Vagina (tissue), 2 donors: ENCODE measurements at regions of chrX and their contacts with region 1.

Region 1: DNA sequence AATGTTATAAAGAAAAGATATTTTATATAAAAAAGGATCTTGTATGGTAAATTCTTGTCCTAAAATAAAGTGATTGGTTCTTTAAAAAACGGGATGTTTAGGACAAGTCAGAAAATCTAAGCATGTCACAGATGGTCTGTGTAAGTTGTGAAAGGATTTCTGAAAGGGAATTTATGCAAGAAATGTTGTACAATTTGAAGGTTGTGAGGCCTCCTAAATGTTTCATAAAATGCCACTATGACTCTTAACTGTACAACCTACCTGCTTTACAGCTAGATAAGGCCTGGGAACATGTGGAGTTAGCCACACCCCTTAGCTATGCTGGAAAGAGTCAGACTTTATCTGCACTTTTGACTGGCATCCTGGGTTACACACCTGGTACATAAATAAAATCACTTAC is 951.5 kb upstream of the POU3F4 start:
- DNase-seq: no peak
- H3K4me3 ChIP-seq: no peak overlapping the region
- H3K27ac ChIP-seq: no peak overlapping the region
- H3K4me1 ChIP-seq: no peaks in the 10 kb centered on the region
- H3K27me3 ChIP-seq: no peaks in the 10 kb centered on the region
- CTCF ChIP-seq: no peak
- POLR2A ChIP-seq: no peak

Region 2: DNA sequence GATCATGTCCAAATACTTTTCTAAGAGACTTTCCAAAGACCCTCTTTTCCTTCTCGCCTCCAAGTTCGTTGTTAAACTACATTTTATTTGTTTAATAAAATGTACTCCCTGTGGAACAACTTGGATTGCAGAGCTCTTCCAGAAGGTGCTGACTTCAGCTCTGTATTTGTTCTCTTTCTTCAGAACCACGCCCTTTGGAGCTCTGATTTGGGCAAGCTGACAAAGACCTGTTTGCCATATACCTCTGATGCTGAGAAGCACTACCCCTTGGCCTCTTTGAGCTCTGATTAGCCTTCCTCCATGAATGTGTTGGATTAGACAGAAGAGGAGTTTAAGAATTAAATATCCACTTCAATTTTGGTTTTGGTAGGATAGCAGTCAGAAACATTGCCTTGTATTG is 136.4 kb after region 1 on chrX:
- intact Hi-C with region 1: no loop called
- DNase-seq: no peak
- H3K4me3 ChIP-seq: no peak overlapping the region
- H3K27ac ChIP-seq: no peak overlapping the region
- H3K4me1 ChIP-seq: no peaks in the 10 kb centered on the region
- H3K27me3 ChIP-seq: no peaks in the 10 kb centered on the region
- CTCF ChIP-seq: no peak
- POLR2A ChIP-seq: no peak

Region 3: DNA sequence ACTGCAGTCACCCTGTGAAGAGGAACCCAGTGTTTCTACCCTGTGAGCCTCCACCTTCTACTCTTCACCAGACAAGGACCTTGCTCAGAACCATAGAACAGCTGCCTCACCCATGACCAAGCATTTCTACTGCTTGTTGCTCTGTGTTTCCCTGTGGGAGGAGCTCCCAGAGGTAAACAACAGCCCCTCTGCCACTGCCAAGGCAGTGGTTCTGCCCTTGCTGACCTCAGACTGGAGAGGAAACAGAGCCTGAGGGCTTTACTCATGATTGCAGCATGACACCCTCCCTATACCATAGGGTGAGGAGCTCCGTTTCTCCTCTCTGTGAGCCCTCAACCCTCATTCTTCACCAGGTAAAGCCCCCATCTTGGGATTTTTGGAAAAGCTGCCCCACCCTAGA is 571.6 kb after region 1 on chrX:
- intact Hi-C with region 1: loop called (anchors 5 kb)
- DNase-seq: no peak
- H3K4me3 ChIP-seq: no peak overlapping the region
- H3K27ac ChIP-seq: no peak overlapping the region
- H3K4me1 ChIP-seq: no peaks in the 10 kb centered on the region
- H3K27me3 ChIP-seq: no peaks in the 10 kb centered on the region
- CTCF ChIP-seq: no peak
- POLR2A ChIP-seq: no peak